Heart left ventricle (tissue), 16 donors: ENCODE measurements at regions of chr7 and their contacts with region 1.

Region 1: DNA sequence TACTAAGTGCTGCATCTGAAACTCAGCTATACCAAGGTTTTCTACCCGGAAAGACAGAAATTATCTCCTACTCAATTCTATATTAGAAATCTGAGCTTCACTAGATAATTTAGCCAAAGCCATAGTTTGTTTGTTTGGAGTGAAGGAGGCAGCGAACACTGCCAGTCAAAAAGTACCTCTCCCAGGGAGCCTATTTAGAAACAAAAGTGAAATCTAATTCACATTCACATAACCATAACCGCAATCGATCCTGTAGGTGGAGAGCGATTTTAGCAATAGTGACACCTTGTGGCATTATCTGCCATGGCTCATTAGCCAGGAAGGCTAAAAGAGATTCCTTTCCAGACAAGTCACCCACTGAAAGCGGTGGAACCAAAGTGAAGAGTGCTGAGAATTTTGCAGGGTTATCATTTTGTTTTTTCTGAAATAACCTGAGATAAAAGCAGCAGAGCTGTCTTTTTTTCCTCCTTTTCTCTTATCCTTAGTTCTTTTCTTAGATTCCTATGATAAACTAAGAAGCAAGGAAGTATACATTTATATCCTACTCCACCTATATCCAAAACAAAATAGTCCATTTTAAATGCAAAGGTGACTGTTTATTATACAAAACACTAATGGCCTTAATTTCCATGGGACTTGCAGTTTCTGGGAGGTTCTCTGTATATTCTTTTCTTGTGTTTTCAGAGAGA is 83.7 kb upstream of the BET1 start:
- DNase-seq: peak in 2 of 5 donors; percentile 29 to 32
- ATAC-seq: peak; percentile 47 to 76 (median 67)
- H3K4me3 ChIP-seq: peak overlapping the region in 9 of 12 donors; percentile 15 to 47 (median 22)
- H3K27ac ChIP-seq: no peak overlapping the region
- H3K4me1 ChIP-seq: peaks cover 0 to 10% (median 0%) of the 10 kb centered on the region in 12 donors
- H3K27me3 ChIP-seq: peaks cover 0 to 5% (median 0%) of the 10 kb centered on the region in 9 donors
- CTCF ChIP-seq: peak; percentile 63 to 87 (median 78)
- POLR2A ChIP-seq: no peak

Region 2: DNA sequence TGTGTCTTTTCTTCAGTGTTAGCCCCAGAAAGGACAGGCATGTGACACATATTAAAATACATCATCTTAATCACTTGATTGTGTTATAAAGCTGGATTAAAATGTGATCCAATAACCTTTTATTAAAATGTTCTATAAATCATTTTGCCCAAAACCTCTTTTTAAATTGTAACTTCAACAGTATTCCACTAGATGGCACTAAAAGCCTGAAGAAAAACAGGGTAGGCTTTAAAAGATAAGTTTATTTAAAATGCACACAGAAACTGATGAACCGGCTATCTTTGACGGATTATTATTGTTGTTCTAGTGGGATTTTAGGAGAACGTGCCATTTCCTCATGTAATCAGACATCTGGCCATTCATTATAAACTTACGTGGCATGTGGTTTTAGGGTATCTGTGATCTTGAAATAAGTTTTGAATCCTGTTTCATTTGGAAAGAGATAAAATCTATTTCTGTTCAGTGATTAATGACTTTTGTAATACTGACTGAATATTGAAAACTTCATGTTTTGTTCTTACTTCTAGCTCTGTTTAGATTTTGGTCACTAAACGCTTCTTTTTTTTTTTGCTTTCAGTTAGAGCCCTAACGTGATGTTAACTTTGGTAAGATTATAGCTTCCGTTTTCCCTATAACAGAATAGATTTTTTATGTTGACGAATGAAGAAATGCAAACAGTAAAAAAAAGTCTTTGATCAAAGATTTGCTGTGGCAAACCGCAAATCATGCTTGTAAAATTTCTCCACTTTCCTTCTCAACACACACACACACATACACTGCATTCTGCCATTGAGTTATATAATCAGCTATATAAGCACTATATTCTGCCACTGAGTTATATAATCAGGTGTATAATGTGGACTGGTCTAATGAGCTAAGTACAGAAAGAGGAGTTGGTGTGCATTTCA is 842.0 kb before region 1 on chr7:
- intact Hi-C with region 1: loop called in 1 of 10 experiments (anchors 10 kb)
- DNase-seq: no peak
- ATAC-seq: no peak
- H3K4me3 ChIP-seq: no peak overlapping the region
- H3K27ac ChIP-seq: no peak overlapping the region
- H3K4me1 ChIP-seq: peaks cover 0 to 9% (median 0%) of the 10 kb centered on the region in 12 donors
- H3K27me3 ChIP-seq: no peaks in the 10 kb centered on the region
- CTCF ChIP-seq: peak; percentile 50 to 75 (median 64)
- POLR2A ChIP-seq: no peak

Region 3: GRCh38 chr7:93715234-93715633 is 372.6 kb before region 1 on chr7:
- intact Hi-C with region 1: loop called in 2 of 10 experiments (anchors 5 to 10 kb)
- DNase-seq: peak in 4 of 5 donors; percentile 20 to 65 (median 32)
- ATAC-seq: peak in 1 of 4 donors; percentile 52
- H3K4me3 ChIP-seq: no peak overlapping the region
- H3K27ac ChIP-seq: no peak overlapping the region
- H3K4me1 ChIP-seq: peaks cover 0 to 19% (median 0%) of the 10 kb centered on the region in 12 donors
- H3K27me3 ChIP-seq: no peaks in the 10 kb centered on the region
- CTCF ChIP-seq: peak in 10 of 12 donors; percentile 8 to 60 (median 36)
- POLR2A ChIP-seq: no peak

Region 4: DNA sequence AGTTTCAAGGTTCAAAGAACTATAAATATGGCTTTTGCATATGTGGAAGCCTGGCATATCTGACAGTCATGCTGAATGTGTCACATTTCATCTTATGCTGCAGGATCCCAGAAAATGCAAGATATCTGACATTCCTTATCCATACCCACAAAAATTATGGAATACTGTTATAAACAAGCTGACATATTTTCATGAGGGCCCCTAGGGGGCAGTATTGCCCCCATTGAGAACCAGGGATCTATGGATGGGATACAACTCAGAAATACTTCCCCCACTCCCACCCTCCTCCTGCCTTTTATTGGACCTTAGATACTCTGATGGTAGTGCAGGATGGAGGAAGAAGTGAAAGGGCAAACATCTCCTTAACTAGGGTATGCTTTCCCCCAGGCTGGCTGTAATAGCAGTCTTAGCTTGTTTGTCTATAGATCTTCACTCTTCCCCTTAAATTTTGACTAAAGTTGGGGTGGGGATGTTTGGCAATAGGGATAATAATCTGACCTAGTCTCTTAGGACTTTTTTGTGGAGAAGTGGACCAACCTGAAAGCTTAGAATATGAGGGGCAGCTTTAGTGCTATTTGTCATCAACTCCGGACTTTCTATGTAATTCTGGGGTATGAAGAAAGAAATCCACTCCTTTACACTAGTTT is 184.9 kb before region 1 on chr7:
- intact Hi-C with region 1: loop called (anchors 2 to 10 kb)
- DNase-seq: peak in 1 of 5 donors; percentile 28
- ATAC-seq: peak; percentile 42 to 60 (median 51)
- H3K4me3 ChIP-seq: no peak overlapping the region
- H3K27ac ChIP-seq: no peak overlapping the region
- H3K4me1 ChIP-seq: peaks cover 0 to 5% (median 0%) of the 10 kb centered on the region in 12 donors
- H3K27me3 ChIP-seq: no peaks in the 10 kb centered on the region
- CTCF ChIP-seq: peak; percentile 62 to 90 (median 79)
- POLR2A ChIP-seq: no peak

Region 5: DNA sequence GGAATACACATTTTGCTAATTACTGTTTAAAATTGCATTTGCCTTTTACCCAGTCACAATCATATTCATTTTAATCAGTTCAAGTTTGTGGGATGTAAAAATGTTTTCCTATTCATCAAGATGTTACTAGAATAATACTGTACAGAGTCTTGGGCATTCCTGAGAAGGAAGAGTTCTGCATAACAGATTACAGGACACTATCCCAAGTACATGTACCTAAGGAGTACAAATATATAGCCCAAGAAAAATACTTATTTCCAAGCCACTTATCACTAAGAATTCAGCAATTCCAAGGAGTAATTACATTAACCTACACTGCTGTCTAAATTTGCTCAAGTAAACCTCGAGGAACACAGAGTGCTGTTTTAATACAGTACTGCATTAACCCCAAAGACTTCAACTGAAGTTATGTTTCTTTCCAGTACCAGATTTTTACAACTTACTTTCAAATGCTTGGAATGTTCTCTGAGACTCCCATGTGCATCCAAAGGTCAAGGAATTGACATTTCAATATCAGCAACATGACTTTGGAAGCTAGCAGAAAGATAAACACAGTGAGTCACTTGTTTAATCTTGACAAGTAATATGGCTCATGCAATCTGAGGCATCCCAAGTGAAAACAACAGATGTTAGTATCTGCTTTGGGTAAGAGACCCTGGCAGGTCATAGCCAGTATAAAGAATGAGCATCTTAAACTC is 41.8 kb after region 1 on chr7:
- intact Hi-C with region 1: no loop called
- DNase-seq: no peak
- ATAC-seq: peak in 2 of 4 donors; percentile 41 to 74
- H3K4me3 ChIP-seq: no peak overlapping the region
- H3K27ac ChIP-seq: no peak overlapping the region
- H3K4me1 ChIP-seq: peaks cover 0 to 3% (median 0%) of the 10 kb centered on the region in 12 donors
- H3K27me3 ChIP-seq: no peaks in the 10 kb centered on the region
- CTCF ChIP-seq: no peak
- POLR2A ChIP-seq: no peak

Region 6: DNA sequence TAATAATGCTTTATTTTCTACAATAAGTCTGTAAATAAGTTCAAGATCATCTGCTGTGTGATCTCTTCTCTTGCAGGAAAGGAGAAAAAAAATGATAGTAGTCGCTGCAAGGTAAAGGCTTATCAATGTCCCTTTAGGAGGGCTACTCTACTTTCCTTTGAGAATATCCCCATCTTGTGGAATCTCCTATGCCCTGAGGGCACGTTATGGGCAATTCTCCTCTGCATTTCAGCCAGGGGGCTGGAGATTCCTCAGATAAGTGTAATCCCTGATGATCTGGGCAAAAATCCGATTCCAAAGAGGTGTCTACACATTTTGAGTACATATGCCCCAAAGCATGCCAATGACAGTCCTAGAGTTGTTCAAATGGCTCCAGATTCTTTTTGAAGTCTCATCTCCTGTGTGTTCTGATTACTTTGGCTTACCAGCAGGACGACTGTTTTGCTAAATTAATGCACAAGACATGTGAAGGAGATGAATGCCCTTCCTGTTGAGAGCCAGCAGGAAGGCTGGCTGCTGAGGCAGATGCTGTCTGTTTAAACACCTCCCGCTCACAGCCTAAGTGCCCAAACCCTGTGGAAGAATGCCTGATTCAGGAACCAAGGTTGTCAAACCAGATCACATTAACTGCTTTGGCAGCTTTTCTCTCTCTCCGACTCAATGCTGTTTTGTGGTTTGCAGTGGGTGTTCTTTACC is 135.7 kb after region 1 on chr7:
- intact Hi-C with region 1: loop called in 3 of 10 experiments (anchors 5 to 10 kb)
- DNase-seq: no peak
- ATAC-seq: peak in 2 of 4 donors; percentile 52
- H3K4me3 ChIP-seq: no peak overlapping the region
- H3K27ac ChIP-seq: no peak overlapping the region
- H3K4me1 ChIP-seq: no peaks in the 10 kb centered on the region
- H3K27me3 ChIP-seq: no peaks in the 10 kb centered on the region
- CTCF ChIP-seq: peak in 11 of 12 donors; percentile 30 to 58 (median 48)
- POLR2A ChIP-seq: no peak